ENCODE measurements at regions of chr6 and their contacts with region 1.

Region 1: DNA sequence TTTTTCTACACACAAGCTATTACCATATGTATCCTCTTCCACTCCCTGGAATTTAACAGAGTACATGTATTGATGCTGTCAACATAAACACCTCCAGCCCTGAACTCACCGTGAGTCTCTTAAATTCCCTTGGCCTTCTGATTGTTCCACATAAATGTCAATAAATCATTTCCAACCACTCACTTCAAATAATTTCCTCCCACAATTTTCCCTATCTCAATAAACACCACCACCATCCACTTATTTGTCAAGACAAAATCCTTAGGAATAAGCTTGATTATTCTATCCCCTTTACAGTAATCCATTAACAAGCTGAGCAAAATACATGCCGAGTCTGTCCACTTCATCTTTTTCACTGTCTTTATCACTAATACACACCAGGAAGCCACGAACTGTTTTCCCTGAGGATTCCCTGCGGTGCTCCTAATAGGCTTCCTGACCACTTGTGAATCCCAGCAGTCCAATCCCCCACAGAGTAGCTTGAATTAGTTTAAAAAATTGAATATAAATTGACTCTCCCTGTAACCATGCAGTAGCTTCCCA is 19.2 kb downstream of the HLA-DRB1 start:
- DNase-seq: no peak
- H3K4me3 Mint-ChIP-seq: no peak overlapping the region
- H3K27ac Mint-ChIP-seq: no peak overlapping the region
- H3K4me1 Mint-ChIP-seq: peaks cover 4% of the 10 kb centered on the region
- H3K27me3 Mint-ChIP-seq: peaks cover 2% of the 10 kb centered on the region

Region 2: GRCh38 chr6:32529697-32530429 is 40.6 kb before region 1 on chr6 and contains the start of gene HLA-DRB5:
- CTCF ChIA-PET with region 1: no interaction called
- POLR2A ChIA-PET with region 1: no interaction called
- intact Hi-C with region 1: loop called (anchors 5 kb)
- DNase-seq: no peak
- H3K4me3 Mint-ChIP-seq: peak within 1 kb of the TSS; percentile 48
- H3K27ac Mint-ChIP-seq: no peak within 1 kb of the TSS
- H3K4me1 Mint-ChIP-seq: no peaks in the 10 kb centered on the region
- H3K27me3 Mint-ChIP-seq: no peaks in the 10 kb centered on the region
- total RNA-seq, gene HLA-DRB5: 0.48 to 0.82 TPM

Measured in activated CD4-positive, alpha-beta memory T cell treated with anti-CD3 and anti-CD28 coated beads for 36 hours (primary cell).